Dendritic cell treated with granulocyte-macrophage colony-stimulating factor and Interleukin-4, amounts not matched to agents 40 ng/mL and 50 ng/mL, for 4 days (primary cell): ENCODE measurements at regions of chr7 and their contacts with region 1.

Region 1: GRCh38 chr7:28020302-28020940 is 160.2 kb downstream of the JAZF1 start:
- H3K4me3 Mint-ChIP-seq: no peak overlapping the region
- H3K27ac Mint-ChIP-seq: no peak overlapping the region
- H3K4me1 Mint-ChIP-seq: peaks cover 22% of the 10 kb centered on the region
- H3K27me3 Mint-ChIP-seq: no peaks in the 10 kb centered on the region

Region 2: DNA sequence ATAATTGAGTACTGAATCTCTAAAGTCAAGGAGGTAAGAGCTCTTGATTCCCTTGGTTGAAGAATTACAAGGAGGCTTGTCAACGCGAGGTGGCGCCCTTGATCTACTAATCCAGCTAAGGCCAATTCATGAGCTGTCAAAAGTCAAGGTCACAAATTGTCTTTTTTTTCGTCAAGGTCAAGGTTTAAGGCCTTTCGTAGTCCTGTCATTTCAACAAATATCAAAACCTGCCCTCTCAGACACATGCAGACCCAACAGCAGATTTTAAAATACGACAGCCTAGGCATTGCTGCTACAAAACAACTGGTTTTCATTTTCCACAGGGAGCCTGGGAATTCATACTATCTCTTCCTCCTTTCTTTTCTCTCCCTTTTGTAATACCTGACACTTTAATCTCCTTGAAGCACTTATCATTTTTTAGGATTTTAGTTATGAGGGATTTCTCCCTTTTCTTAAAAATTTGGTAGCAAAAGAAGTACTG is 824.1 kb before region 1 on chr7:
- intact Hi-C with region 1: loop called (anchors 5 kb)
- H3K4me3 Mint-ChIP-seq: no peak overlapping the region
- H3K27ac Mint-ChIP-seq: no peak overlapping the region
- H3K4me1 Mint-ChIP-seq: peaks cover 48% of the 10 kb centered on the region
- H3K27me3 Mint-ChIP-seq: peaks cover 81% of the 10 kb centered on the region

Region 3: GRCh38 chr7:27689591-27690164 is 330.7 kb before region 1 on chr7:
- intact Hi-C with region 1: loop called (anchors 5 kb)
- H3K4me3 Mint-ChIP-seq: no peak overlapping the region
- H3K27ac Mint-ChIP-seq: no peak overlapping the region
- H3K4me1 Mint-ChIP-seq: peaks cover 10% of the 10 kb centered on the region
- H3K27me3 Mint-ChIP-seq: peaks cover 6% of the 10 kb centered on the region

Region 4: DNA sequence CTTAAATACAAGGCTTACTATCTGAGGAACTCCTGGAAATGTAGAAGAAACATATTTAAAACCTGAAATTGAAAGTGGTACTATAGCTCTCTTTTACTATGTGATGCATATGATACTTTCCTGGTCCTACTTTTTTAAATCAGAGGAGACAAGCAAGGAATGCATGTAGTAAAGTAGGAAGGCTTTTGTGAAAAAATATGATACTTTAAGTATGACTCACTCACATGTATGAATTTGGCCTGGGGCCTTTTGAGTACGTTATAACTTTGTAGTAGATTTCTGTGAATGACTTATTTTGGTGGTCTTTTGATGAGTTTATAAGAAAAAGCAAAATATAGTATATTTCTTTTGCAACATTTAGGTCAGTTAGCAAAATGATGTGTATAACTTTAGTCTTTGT is 226.6 kb before region 1 on chr7:
- intact Hi-C with region 1: loop called (anchors 10 kb)
- H3K4me3 Mint-ChIP-seq: no peak overlapping the region
- H3K27ac Mint-ChIP-seq: no peak overlapping the region
- H3K4me1 Mint-ChIP-seq: no peaks in the 10 kb centered on the region
- H3K27me3 Mint-ChIP-seq: no peaks in the 10 kb centered on the region

Region 5: GRCh38 chr7:28096713-28097112 is 76.3 kb after region 1 on chr7:
- intact Hi-C with region 1: loop called (anchors 5 kb)
- H3K4me3 Mint-ChIP-seq: no peak overlapping the region
- H3K27ac Mint-ChIP-seq: no peak overlapping the region
- H3K4me1 Mint-ChIP-seq: peaks cover 26% of the 10 kb centered on the region
- H3K27me3 Mint-ChIP-seq: no peaks in the 10 kb centered on the region